ENCODE measurements at regions of chr12 and their contacts with region 1.

Region 1: DNA sequence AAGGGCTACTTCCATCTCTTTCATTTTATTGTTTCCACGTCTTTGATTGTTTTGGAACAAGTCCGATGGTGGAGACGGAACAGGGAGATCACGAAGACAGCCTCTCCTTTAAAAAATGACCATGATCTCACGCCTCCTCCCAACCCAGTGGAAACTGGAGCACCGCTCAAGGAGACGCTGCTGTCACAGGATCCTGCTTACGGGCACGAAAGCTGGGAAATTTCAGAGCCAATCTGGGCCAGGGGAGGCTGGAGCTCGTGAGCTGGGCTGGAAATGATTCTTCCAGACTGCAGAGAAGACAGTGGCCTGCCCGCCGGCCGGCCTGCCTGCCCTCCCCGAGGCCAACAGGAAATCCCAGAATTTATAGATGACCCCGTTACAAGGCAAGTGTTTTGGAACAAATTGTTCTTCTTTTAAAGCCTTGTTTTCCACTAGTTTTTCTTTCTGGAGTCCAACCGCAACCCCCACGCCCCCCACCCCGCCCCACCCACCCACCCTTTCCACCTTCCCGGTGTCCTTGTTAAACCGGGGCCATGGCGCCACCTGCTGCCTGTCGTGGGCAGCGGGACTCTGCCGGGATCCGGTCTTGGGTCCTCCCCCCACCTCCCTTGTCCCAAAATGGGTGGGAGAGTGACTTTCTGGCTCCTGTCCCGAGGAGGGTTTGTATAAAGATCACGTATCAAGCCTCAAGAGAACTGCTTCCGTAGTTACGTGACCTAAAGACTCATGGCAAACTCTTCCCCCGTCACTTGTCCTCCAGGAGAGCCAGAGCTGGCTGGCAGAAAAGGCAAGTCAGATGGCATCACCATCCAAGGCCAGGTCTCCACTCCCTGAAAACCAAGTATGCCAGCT is 40.3 kb downstream of the MAP1LC3B2 start:
- DNase-seq: no peak
- H3K4me3 ChIP-seq: peak overlapping the region; percentile 36
- CTCF ChIP-seq: peak; percentile 80

Region 2: DNA sequence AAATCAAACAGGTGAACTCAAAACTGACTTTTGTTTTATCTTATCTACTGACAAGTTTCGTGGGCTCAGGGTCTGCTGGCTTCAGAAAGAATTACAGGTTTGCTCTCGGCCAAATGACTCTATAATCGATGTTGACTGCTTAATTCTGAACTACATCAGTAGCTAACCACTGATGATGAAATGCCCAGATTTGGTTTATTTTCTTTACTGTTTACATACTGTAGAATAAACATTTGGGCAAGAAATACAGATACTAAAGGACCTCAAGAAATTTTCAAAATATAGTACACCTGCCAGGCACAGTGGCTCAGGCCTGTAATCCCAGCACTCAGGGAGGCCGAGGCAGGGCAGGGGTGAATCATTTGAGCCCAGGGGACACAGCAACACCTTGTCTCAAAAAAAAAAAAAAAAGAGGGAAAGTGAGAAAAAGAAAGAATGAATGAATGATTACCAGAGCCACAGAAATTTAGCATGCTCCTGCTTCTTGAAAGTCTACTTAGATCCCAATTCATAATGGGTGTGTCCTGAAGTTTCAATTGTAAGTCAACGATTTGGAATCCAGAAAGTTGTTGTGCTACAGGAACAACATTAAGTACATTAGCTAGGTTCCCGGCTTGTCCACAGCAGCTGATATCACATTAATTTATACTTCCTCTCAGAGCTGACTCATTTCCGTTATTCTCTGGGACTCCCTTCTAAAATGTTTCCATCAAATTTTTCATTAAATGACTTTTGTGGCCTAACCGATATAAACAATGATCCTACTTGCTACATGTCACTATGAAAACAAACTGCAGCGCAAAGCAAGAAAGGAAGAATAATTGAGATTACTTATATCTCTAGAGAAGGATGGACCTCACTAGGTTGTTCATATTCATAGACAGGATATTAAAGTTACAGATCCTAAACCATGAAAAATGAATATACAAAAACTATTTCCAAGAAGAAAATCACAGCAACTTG is 456.3 kb before region 1 on chr12:
- CTCF ChIA-PET with region 1: interaction called, 13 read pairs
- POLR2A ChIA-PET with region 1: no interaction called
- DNase-seq: no peak
- H3K4me3 ChIP-seq: no peak overlapping the region
- CTCF ChIP-seq: no peak

Region 3: GRCh38 chr12:116587270-116587669 is 12.2 kb before region 1 on chr12:
- CTCF ChIA-PET with region 1: interaction called, 16 read pairs
- POLR2A ChIA-PET with region 1: no interaction called
- DNase-seq: no peak
- H3K4me3 ChIP-seq: no peak overlapping the region
- CTCF ChIP-seq: no peak

Region 4: DNA sequence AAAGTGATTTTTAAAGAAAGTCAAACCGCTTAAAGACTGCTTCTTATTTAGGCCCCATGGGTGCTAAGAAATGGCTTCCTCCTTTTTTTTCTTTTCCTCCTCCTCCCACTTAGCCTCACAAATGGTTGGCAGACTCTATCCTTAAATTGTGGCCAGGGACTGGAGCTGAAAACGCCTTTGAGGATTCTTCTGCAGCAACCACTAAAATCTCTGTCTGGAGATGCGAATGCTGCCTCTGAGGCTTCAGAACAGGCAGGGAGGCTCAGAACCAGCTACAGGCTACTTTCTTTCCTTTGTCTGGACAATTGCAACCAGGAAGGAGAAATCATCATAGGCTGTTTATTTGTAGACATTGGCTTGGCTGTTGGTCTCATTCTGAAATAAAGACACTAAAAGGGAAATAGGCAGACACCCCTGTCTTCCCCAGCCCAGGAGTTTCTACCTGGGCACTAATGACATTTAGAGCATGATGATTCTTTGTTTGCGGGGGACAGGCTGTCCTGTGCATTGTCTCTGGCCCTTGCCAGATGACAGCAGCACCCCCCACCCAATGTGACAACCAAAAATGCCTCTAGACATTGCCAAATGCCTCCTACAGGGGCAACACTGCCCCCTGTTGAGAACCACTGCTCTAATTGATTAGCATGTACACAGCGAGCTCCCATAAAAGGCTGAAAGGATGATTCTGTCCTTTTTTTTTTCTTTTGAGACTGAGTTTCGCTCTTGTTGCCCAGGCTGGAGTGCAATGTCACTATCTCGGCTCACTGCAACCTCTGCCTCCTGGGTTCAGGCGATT is 10.0 kb after region 1 on chr12:
- CTCF ChIA-PET with region 1: interaction called, 37 read pairs
- POLR2A ChIA-PET with region 1: no interaction called
- DNase-seq: no peak
- H3K4me3 ChIP-seq: no peak overlapping the region
- CTCF ChIP-seq: no peak

Region 5: DNA sequence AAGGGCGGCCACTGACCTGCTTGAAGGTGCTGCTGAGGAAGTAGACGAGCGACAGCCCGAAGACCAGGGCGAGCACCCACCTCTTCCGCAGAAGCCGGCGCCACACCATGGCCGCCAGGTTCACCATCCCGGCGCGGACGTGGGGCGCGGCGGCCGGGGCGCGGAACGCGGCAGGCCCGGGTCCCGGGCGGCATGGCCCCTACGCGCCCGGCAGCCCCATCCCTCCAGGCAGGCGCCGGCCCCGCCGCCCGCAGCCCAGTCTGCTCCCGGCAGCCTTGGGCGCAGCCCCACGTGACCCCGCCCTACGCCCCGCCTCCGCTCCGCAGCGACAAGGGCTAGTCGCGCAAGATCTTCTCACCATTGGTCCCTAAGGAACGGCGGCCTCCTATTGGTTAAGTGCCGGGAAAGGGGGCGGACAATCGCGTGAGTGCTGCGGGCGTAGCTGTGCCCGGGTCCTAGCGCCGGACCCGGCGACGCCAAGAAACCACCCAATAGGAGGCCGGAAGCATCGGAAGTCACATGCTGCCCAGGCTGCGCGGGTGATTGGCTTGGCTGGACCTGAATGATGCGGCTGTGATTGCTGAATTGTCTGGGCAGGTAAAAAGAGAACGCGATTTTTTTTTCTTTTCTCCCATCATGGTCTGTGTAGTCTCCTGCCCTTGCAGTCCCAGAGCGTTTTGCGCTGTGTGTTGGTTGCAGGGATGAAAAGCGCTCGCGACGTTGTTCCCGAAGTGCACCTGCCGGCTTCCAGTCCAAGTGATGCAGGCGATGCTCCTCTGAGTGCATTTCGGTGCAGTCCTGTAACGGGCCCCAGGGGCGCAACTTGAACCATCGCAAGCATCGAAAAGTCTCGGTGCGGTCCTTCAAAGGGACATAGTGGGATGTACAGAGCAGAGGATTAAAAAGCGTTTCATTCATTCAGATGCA is 138.5 kb after region 1 on chr12 and contains the starts of genes RNFT2 and SPRING1:
- CTCF ChIA-PET with region 1: no interaction called
- POLR2A ChIA-PET with region 1: no interaction called
- DNase-seq: peak; percentile 96
- H3K4me3 ChIP-seq: peak within 1 kb of the TSS; percentile 91
- CTCF ChIP-seq: no peak

Measured in AG04449 (cell line).